Mammary epithelial cell (primary cell): ENCODE measurements at regions of chrX and their contacts with region 1.

Region 1: GRCh38 chrX:149286940-149287349 is 218.2 kb downstream of the IDS start:
- DNase-seq: peak; percentile 33
- H3K4me3 ChIP-seq: no peak overlapping the region
- H3K27ac ChIP-seq: no peak overlapping the region
- H3K4me1 ChIP-seq: no peaks in the 10 kb centered on the region
- H3K27me3 ChIP-seq: no peaks in the 10 kb centered on the region
- CTCF ChIP-seq: peak; percentile 79 to 82

Region 2: DNA sequence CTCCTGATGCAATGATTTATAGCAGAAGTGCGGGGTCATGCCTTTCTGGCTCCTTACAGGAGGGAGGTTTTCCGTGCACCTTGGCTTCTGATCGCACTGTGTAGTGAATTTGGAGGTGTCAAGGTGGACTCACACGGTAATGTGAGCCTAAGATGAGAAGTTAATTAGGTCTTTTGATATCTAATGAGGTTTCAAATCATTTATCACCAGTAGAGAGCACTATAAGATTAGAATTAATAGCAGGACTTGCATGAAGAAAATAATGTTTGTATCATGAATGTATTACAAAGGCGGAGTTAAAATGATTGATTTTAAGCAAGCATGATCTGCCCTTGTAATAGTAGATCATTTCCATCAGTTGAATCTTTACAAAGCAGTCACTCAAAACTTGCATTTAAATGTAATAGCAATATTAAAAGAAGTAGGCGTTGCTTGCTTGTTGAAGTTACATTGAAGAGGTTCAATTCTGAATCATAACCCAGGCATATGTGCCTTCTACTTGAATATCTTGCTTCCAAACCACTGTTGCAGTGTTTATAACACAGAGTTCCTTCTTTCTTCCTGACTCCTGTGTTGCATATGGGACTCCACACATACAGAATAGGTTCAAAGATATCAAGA is 1153.7 kb before region 1 on chrX:
- CTCF ChIA-PET with region 1: no interaction called
- dilution Hi-C with region 1: no loop called
- in situ Hi-C with region 1: no loop called
- intact Hi-C with region 1: loop called (anchors 2 kb)
- DNase-seq: peak; percentile 1
- H3K4me3 ChIP-seq: no peak overlapping the region
- H3K27ac ChIP-seq: no peak overlapping the region
- H3K4me1 ChIP-seq: no peaks in the 10 kb centered on the region
- H3K27me3 ChIP-seq: no peaks in the 10 kb centered on the region
- CTCF ChIP-seq: peak in 1 of 2 donors; percentile 13

Region 3: DNA sequence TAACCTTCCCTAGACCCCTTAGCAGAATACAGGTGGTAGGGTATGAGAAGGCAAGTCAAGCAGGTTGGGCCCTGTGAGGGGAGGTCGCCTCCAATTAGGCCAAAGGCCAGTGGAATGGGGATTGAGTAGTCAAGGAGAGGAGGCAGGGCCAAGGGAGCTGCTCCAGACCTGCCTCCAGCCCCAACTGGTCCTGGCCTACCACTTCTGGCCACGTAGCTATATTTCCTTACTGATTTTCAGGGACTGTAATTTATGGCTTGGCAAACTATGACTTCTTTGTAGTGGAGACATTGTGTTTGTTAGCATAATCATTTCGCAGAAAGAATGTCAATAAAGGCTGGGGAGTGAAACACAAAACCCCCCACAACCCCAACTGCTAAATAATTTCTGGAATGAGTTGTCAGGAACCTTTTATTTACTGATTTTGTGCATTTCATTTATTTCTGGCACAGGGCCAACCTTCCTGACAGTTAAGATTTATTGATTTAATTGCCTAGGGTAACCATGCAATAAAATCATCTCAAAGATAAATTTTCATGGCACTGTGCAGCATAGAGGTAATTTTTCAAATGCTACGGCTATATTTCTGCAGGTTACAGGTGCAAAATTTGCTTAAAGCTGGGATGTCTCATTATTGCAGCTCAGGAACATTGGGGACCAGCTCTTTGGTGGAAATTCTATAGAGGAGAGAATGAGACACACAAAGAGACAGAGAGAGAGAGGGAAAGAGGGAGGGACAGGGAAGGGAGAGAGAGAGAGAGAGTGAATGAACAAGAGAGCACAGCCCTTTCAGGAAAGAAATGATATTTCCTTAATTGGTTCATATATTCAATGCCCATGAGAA is 276.7 kb before region 1 on chrX:
- CTCF ChIA-PET with region 1: no interaction called
- dilution Hi-C with region 1: no loop called
- in situ Hi-C with region 1: no loop called
- intact Hi-C with region 1: loop called (anchors 10 kb)
- DNase-seq: no peak
- H3K4me3 ChIP-seq: no peak overlapping the region
- H3K27ac ChIP-seq: no peak overlapping the region
- H3K4me1 ChIP-seq: no peaks in the 10 kb centered on the region
- H3K27me3 ChIP-seq: no peaks in the 10 kb centered on the region
- CTCF ChIP-seq: no peak

Region 4: DNA sequence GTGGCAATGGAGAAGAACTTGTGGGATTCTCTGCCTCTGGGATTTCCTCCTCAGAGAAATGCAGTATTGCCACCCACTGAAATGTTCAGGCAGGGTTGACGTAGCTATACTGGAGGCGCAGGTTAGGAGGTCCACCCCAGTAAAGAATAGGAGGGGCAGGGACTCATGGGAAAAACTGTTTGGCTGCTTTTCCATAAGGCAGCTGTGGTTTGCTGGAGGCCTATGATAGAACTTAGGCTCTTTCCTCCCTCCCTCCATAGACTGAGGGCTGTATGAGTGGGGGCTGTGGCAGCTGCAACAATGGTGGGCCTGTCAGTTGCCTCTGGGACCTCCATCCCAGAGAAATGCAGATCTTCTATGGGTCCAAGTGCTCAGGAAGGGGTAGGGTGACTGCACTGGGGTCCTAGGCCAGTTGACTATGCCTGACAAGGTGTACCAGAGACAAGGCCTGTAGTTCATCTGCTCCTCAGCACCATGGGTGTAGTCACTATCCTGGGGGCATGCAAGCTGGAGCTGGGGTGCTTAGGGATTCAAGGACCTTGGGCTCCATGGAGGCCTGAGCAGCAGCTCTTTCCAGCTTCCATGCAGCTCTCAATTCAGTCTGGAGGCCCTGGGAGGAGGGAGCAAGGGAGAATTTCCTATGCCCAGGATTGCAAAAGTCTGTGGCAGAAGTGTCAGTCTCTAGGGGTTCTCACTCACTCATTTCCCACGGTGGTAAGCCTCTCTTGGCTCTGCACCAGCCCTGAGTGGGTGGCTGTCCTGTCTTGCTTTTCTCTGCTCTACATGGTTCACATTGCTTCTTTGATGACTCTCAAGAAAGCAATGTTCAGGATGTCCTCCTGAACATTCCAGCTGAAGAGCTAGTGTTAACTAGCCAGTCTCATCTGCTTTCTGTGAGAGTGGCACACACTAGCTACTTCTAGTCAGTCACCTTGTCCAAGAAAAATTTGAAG is 134.9 kb before region 1 on chrX:
- CTCF ChIA-PET with region 1: interaction called, 6 read pairs
- dilution Hi-C with region 1: no loop called
- in situ Hi-C with region 1: no loop called
- intact Hi-C with region 1: loop called (anchors 2 kb)
- DNase-seq: peak; percentile 91
- H3K4me3 ChIP-seq: no peak overlapping the region
- H3K27ac ChIP-seq: peak overlapping the region; percentile 57
- H3K4me1 ChIP-seq: peaks cover 5% of the 10 kb centered on the region
- H3K27me3 ChIP-seq: no peaks in the 10 kb centered on the region
- CTCF ChIP-seq: no peak